CD8-positive, alpha-beta T cell (primary cell): ENCODE measurements at regions of chr9 and their contacts with region 1.

Region 1: DNA sequence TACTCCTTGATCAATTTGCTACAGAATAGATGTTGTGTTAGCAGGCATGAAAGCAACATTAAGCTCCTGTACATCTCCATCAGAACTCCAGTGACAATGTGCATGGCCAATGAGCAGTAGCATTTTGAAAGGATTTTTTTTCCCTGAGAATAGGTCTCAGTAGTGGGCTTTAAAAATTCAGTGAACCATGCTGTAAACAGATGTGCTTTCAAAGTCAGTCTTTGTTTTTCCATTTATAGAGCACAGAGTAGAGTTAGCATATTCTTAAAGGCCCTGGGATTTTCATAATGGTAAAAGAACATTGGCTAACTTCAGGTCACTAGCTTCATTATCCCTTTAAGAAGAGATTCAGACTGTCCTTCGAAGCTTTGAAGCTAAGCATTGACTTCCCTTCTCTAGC is 150.8 kb downstream of the VPS13A start:
- DNase-seq: no peak
- ATAC-seq: no peak
- H3K4me3 ChIP-seq: no peak overlapping the region
- H3K4me3 Mint-ChIP-seq: no peak overlapping the region
- H3K27ac ChIP-seq: no peak overlapping the region
- H3K27ac Mint-ChIP-seq: no peak overlapping the region
- H3K4me1 ChIP-seq: no peaks in the 10 kb centered on the region
- H3K4me1 Mint-ChIP-seq: no peaks in the 10 kb centered on the region
- H3K27me3 ChIP-seq: no peaks in the 10 kb centered on the region
- H3K27me3 Mint-ChIP-seq: no peaks in the 10 kb centered on the region
- CTCF ChIP-seq: no peak

Region 2: DNA sequence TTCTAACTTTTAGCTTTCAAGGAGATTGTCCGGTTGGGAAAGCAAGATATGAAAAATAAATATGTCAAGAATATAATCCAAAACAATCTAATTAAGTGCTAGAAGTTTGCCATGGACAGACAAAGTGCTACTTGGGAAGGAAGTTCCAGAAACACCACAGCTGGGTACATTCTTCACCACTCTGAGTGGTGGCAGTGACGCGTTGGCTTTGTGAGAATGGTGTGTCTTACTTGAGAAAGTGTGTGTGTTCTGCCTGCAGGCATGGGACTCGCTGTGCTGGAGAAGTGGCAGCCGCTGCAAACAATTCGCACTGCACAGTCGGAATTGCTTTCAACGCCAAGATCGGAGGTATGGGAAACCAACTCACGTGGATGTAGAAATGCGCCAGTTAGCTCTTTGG is 1260.4 kb before region 1 on chr9:
- CTCF ChIA-PET with region 1: no interaction called
- POLR2A ChIA-PET with region 1: no interaction called
- intact Hi-C with region 1: loop called in 1 of 2 experiments (anchors 10 kb)
- DNase-seq: no peak
- ATAC-seq: no peak
- H3K4me3 ChIP-seq: no peak overlapping the region
- H3K4me3 Mint-ChIP-seq: no peak overlapping the region
- H3K27ac ChIP-seq: no peak overlapping the region
- H3K27ac Mint-ChIP-seq: no peak overlapping the region
- H3K4me1 ChIP-seq: no peaks in the 10 kb centered on the region
- H3K4me1 Mint-ChIP-seq: peaks cover 2% of the 10 kb centered on the region
- H3K27me3 ChIP-seq: no peaks in the 10 kb centered on the region
- H3K27me3 Mint-ChIP-seq: no peaks in the 10 kb centered on the region
- CTCF ChIP-seq: no peak

Region 3: GRCh38 chr9:77271023-77271690 is 56.9 kb before region 1 on chr9:
- CTCF ChIA-PET with region 1: no interaction called
- POLR2A ChIA-PET with region 1: no interaction called
- intact Hi-C with region 1: no loop called
- DNase-seq: no peak
- ATAC-seq: no peak
- H3K4me3 ChIP-seq: no peak overlapping the region
- H3K4me3 Mint-ChIP-seq: no peak overlapping the region
- H3K27ac ChIP-seq: no peak overlapping the region
- H3K27ac Mint-ChIP-seq: no peak overlapping the region
- H3K4me1 ChIP-seq: no peaks in the 10 kb centered on the region
- H3K4me1 Mint-ChIP-seq: no peaks in the 10 kb centered on the region
- H3K27me3 ChIP-seq: no peaks in the 10 kb centered on the region
- H3K27me3 Mint-ChIP-seq: no peaks in the 10 kb centered on the region
- CTCF ChIP-seq: no peak

Region 4: GRCh38 chr9:77316058-77316457 is 12.0 kb before region 1 on chr9:
- CTCF ChIA-PET with region 1: no interaction called
- POLR2A ChIA-PET with region 1: no interaction called
- intact Hi-C with region 1: loop called in 1 of 2 experiments (anchors 2 kb)
- DNase-seq: no peak
- ATAC-seq: no peak
- H3K4me3 ChIP-seq: no peak overlapping the region
- H3K4me3 Mint-ChIP-seq: no peak overlapping the region
- H3K27ac ChIP-seq: no peak overlapping the region
- H3K27ac Mint-ChIP-seq: no peak overlapping the region
- H3K4me1 ChIP-seq: no peaks in the 10 kb centered on the region
- H3K4me1 Mint-ChIP-seq: no peaks in the 10 kb centered on the region
- H3K27me3 ChIP-seq: no peaks in the 10 kb centered on the region
- H3K27me3 Mint-ChIP-seq: no peaks in the 10 kb centered on the region
- CTCF ChIP-seq: no peak

Region 5: DNA sequence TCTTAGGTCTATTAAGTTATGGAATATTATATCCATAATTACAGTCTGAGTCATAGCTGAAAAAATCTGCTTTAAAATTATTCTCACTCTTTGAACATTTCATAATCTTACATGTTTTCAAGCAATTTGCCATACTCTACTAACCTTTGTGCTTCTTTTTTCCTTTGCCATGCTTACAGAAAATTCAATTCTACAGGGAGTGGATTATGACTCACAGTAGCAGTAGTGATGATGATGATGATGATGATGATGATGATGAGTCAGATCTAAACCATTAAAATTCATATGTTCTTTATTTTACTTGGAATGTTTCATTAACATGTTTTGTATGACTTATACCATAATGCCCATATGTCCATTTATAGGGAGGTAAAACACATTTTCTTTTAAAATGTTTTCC is 56.3 kb after region 1 on chr9:
- CTCF ChIA-PET with region 1: no interaction called
- POLR2A ChIA-PET with region 1: no interaction called
- intact Hi-C with region 1: loop called in 1 of 2 experiments (anchors 10 kb)
- DNase-seq: no peak
- ATAC-seq: no peak
- H3K4me3 ChIP-seq: no peak overlapping the region
- H3K4me3 Mint-ChIP-seq: no peak overlapping the region
- H3K27ac ChIP-seq: no peak overlapping the region
- H3K27ac Mint-ChIP-seq: no peak overlapping the region
- H3K4me1 ChIP-seq: no peaks in the 10 kb centered on the region
- H3K4me1 Mint-ChIP-seq: no peaks in the 10 kb centered on the region
- H3K27me3 ChIP-seq: no peaks in the 10 kb centered on the region
- H3K27me3 Mint-ChIP-seq: no peaks in the 10 kb centered on the region
- CTCF ChIP-seq: no peak

Region 6: DNA sequence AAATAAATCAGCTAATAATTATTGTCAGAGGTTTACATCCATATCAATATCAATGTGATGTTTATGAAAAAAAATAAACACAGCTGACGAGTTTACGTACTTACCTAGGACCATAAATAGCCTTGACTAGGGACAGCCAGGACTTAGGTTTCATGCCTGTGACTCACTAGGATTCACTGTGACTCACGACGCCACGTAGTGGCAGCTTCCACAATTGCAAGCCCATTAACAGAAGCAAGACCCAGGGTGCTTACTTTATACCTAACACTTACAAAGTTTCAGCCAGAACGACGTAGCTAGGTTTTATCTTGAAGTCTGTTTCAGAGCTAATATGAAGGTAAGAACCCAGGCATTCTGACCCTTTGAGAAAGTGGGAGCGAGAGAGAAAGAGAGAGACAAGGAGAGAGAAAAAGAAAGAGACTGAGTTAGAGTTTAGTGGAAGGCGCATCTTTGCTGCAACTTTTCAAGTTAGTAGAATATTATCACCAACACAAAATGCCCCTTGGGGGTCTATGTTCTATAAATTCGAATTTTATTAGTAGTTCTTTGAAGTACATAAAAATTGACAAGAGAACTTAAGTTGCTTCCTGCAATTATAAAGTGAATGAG is 128.8 kb after region 1 on chr9:
- CTCF ChIA-PET with region 1: no interaction called
- POLR2A ChIA-PET with region 1: no interaction called
- intact Hi-C with region 1: no loop called
- DNase-seq: peak; percentile 63 to 81 (median 74)
- ATAC-seq: peak; percentile 85
- H3K4me3 ChIP-seq: no peak overlapping the region
- H3K4me3 Mint-ChIP-seq: no peak overlapping the region
- H3K27ac ChIP-seq: no peak overlapping the region
- H3K27ac Mint-ChIP-seq: no peak overlapping the region
- H3K4me1 ChIP-seq: no peaks in the 10 kb centered on the region
- H3K4me1 Mint-ChIP-seq: peaks cover 15% of the 10 kb centered on the region
- H3K27me3 ChIP-seq: no peaks in the 10 kb centered on the region
- H3K27me3 Mint-ChIP-seq: no peaks in the 10 kb centered on the region
- CTCF ChIP-seq: peak; percentile 74

Region 7: GRCh38 chr9:77556396-77556795 is 228.3 kb after region 1 on chr9:
- CTCF ChIA-PET with region 1: no interaction called
- POLR2A ChIA-PET with region 1: no interaction called
- intact Hi-C with region 1: no loop called
- DNase-seq: no peak
- ATAC-seq: no peak
- H3K4me3 ChIP-seq: no peak overlapping the region
- H3K4me3 Mint-ChIP-seq: no peak overlapping the region
- H3K27ac ChIP-seq: no peak overlapping the region
- H3K27ac Mint-ChIP-seq: no peak overlapping the region
- H3K4me1 ChIP-seq: no peaks in the 10 kb centered on the region
- H3K4me1 Mint-ChIP-seq: no peaks in the 10 kb centered on the region
- H3K27me3 ChIP-seq: no peaks in the 10 kb centered on the region
- H3K27me3 Mint-ChIP-seq: peaks cover 3% of the 10 kb centered on the region
- CTCF ChIP-seq: no peak